AG04449 (cell line): ENCODE measurements at regions of chr15 and their contacts with region 1.

Region 1: GRCh38 chr15:78108299-78109084 is 16.1 kb downstream of the SH2D7 start:
- DNase-seq: no peak
- H3K4me3 ChIP-seq: no peak overlapping the region
- CTCF ChIP-seq: peak; percentile 98

Region 2: GRCh38 chr15:77784395-77785292 is 323.8 kb before region 1 on chr15:
- CTCF ChIA-PET with region 1: no interaction called
- POLR2A ChIA-PET with region 1: no interaction called
- DNase-seq: no peak
- H3K4me3 ChIP-seq: no peak overlapping the region
- CTCF ChIP-seq: peak; percentile 28

Region 3: GRCh38 chr15:77901974-77902750 is 206.3 kb before region 1 on chr15:
- CTCF ChIA-PET with region 1: interaction called, 15 read pairs
- POLR2A ChIA-PET with region 1: no interaction called
- DNase-seq: no peak
- H3K4me3 ChIP-seq: no peak overlapping the region
- CTCF ChIP-seq: peak; percentile 21

Region 4: DNA sequence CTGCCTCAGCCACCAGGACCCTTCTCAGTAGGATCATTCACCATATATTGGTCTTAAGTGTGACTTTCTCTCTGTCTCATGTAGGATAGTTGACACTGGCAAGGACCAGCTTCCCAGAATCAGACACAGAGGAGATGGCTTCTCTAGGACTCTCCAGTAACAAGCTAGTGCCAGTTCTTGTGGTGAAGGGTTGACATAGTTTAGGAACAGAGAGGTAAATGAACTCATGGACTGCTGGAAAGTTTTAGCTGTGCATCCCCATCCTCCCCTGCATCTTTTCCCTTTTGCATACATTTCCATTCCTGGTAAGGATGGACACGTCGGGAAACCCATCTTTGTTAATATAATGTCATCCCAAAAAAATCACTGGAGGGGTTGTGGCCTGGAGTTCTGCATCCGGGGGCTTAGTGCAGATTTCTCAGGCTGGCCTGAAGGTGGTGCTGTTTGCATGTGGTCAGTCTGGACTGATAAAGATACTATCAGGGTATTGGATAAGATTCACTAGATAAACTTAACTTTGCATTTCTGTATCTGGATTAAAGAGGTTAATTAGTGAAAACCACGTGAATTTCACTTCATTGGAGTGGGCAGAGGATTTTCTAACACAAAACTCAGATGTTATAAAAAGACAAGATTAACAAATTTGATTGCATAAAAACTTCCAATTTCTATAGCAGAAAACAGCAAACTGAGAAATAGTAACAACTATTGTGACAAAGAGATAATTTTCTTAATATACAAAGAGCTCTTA is 141.8 kb before region 1 on chr15:
- CTCF ChIA-PET with region 1: interaction called, 538 read pairs
- POLR2A ChIA-PET with region 1: no interaction called
- DNase-seq: no peak
- H3K4me3 ChIP-seq: no peak overlapping the region
- CTCF ChIP-seq: peak; percentile 73

Region 5: DNA sequence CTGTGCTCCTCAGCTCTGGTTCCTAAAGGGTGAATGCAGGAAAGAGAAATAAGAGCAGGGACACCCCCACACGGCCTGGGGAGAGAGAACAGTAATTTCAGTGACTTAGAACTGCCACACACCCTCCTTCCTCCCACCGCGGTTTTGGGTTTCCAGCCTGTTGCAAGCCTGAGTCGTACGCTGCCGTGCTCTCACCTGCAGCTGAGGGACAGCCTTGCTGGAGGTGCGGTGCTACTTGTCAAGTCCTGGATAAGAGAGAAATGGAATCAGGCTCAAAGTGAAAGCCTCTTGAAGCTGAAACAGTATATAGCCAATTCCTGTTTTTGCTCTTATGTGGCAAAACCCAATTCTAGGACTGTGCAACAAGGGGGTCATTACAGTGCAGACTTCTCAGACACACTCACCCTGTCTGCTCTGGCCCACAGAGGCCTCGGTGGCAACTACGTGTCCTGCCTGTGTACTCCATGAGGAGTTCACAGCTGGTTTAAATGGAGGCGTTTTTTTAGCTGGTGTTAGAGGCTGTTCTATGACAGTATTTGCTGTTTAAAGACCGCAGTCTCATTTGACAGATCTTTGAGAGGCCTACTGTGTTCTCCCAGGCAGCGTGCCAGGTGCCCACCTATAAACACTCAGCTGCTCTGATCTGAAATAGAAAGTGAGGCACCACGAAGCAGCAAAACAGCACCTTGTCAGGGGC is 73.8 kb before region 1 on chr15:
- CTCF ChIA-PET with region 1: interaction called, 19 read pairs
- POLR2A ChIA-PET with region 1: no interaction called
- DNase-seq: no peak
- H3K4me3 ChIP-seq: no peak overlapping the region
- CTCF ChIP-seq: no peak

Region 6: DNA sequence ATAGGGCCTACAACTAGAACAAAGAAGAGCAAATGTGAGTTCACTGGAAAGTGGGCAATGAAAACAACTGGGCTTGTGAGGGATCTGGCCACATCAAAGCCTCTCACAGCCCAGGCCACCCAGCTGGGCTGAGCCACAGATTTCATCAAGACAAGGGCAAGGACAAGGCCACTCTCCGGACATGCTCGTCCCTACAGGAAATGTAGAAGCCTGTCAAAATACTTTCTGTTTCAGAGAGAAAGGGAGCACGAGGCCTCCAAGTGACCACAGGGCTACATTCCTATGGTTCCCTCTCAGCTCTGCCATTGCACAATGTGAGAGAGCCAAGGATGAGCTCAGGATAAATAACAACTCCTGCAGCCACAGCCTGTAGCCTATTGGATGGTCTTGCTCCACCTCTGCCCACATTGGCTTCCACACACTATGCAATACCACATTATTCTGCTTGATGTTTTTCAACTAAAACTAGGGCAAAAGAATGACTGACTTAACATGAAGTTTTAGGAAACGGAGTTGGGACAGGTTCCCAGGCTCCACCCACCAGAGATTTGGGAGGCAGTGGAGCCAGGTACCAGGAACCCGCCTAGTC is 43.1 kb before region 1 on chr15:
- CTCF ChIA-PET with region 1: interaction called, 20 read pairs
- POLR2A ChIA-PET with region 1: no interaction called
- DNase-seq: peak; percentile 97
- H3K4me3 ChIP-seq: peak overlapping the region; percentile 35
- CTCF ChIP-seq: no peak

Region 7: DNA sequence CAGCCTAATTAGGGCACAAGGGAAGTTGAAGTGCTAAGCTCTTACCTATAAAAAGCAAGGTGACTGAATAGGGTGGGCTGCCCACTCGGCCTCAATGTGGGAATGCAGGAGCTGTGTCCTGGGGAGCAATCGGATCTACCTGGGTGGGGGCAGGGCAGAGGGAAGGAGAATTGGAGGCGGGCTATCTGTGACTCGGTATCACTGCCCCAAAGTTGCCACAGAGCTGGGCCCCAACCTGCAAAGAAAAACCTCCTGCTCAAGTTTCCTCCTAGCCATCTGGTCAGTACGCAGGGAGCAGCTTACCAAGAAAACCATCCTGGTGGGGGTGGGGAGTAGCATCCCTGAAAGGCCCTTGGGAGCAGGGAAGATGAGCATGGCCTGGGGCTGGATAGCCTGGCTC is 12.0 kb after region 1 on chr15:
- CTCF ChIA-PET with region 1: interaction called, 117 read pairs
- POLR2A ChIA-PET with region 1: no interaction called
- DNase-seq: no peak
- H3K4me3 ChIP-seq: no peak overlapping the region
- CTCF ChIP-seq: no peak

Region 8: DNA sequence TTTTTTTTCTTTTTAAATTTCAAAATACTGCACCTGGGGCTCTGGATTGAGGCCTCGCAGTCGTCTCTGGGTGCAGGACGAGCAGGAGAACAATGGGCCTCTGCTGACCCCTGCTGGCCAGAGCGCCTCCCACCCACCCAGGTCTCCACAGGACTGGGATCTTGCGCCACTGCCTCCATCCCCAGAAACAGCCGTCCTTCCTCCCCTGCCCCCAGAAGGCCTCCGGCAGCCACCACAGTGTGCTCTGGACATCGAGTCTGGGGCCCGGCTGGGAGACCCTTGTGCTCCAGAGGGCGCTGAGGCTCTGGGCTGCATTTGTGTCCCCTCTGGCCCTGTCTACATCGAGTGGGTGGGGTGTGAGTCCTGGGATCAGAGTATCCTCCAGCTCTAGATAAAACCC is 132.5 kb after region 1 on chr15:
- CTCF ChIA-PET with region 1: interaction called, 352 read pairs
- POLR2A ChIA-PET with region 1: no interaction called
- DNase-seq: no peak
- H3K4me3 ChIP-seq: no peak overlapping the region
- CTCF ChIP-seq: peak; percentile 96

Region 9: DNA sequence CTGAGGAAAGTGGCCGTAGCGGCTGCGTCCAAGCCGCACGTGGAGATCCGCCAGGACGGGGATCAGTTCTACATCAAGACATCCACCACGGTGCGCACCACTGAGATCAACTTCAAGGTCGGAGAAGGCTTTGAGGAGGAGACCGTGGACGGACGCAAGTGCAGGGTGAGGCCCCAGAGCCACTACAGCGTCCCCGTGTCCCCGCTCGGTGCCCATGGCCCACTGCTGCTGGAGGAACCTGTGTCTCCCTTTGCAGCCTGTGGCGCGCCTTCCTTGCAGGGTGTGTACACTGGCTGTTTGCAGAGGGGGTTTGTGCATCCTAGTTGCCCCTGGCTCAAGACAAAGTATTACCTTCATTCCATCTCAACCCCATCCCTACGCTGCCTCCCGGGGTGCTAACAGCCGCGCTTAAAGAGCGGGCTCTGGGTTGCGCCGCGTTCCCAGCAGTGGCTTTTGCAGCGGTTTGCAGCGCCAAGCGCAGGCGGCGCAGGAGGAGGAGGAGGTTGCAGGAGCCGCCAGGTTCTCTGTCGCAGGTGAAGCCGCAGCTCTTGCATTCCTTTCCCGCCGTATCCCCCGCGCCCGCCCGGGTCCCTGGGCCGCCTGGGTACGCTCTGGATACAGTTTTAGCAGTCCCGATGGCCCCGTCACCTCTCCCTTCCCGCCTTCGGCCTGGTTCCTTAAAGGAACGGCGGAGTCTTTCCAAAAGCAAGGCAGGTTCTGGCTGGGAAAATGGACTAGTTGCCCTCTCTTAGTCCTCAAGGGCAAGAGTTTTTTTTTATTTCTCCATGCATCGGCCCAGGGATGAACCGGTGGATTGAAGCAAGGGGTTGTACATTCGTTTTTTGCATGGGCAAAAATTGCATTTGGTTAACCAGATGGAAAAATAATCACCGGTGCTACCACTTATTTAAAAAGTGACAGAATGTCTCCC is 232.8 kb after region 1 on chr15:
- CTCF ChIA-PET with region 1: no interaction called
- POLR2A ChIA-PET with region 1: no interaction called
- DNase-seq: no peak
- H3K4me3 ChIP-seq: no peak overlapping the region
- CTCF ChIP-seq: no peak